Activated CD8-positive, alpha-beta T cell treated with anti-CD3 and anti-CD28 coated beads for 36 hours (primary cell): ENCODE measurements at regions of chr11 and their contacts with region 1.

Region 1: GRCh38 chr11:116454020-116454645 is 318.7 kb downstream of the BUD13 start:
- DNase-seq: peak; percentile 49
- ATAC-seq: no peak
- H3K4me3 Mint-ChIP-seq: no peak overlapping the region
- H3K27ac Mint-ChIP-seq: no peak overlapping the region
- H3K4me1 Mint-ChIP-seq: no peaks in the 10 kb centered on the region
- H3K27me3 Mint-ChIP-seq: peaks cover 3% of the 10 kb centered on the region
- CTCF ChIP-seq: peak; percentile 56

Region 2: GRCh38 chr11:116641561-116642045 is 187.5 kb after region 1 on chr11:
- CTCF ChIA-PET with region 1: interaction called, 10 read pairs
- POLR2A ChIA-PET with region 1: no interaction called
- intact Hi-C with region 1: no loop called
- DNase-seq: peak; percentile 51
- ATAC-seq: peak; percentile 72
- H3K4me3 Mint-ChIP-seq: no peak overlapping the region
- H3K27ac Mint-ChIP-seq: no peak overlapping the region
- H3K4me1 Mint-ChIP-seq: no peaks in the 10 kb centered on the region
- H3K27me3 Mint-ChIP-seq: peaks cover 2% of the 10 kb centered on the region
- CTCF ChIP-seq: peak; percentile 75